Activated naive CD4-positive, alpha-beta T cell treated with anti-CD3 and anti-CD28 coated beads for 36 hours (primary cell): ENCODE measurements at regions of chr6 and their contacts with region 1.

Region 1: GRCh38 chr6:3742426-3743344 is 8.8 kb downstream of the PXDC1 start:
- DNase-seq: peak; percentile 94
- H3K4me3 Mint-ChIP-seq: no peak overlapping the region
- H3K27ac Mint-ChIP-seq: no peak overlapping the region
- H3K4me1 Mint-ChIP-seq: peaks cover 10% of the 10 kb centered on the region
- H3K27me3 Mint-ChIP-seq: peaks cover 9% of the 10 kb centered on the region

Region 2: DNA sequence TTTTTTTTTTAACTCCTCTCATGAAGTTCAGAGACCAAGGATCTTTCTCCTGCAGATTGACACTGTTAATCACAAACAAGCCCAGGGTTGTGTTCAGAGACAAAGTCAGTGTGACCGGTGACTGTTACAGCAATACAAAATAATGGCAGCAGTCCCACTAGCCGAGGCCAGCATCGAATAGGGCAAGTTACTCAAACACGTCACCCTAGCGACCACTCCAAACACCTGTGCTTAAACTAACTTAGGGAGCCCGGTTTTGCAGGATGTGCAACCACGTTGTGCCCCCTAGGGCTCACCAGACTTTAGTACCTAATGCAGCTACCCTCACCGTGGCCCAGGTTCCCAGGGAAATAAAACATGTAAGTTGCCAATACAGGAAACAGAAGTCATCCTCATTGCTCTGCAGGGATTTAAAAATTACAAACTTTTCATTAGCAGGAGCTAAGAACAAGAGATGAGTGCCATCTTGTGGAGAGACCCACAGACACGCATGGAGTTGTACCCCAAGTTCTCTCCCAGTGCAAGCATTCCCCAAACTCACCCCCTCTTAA is 144.5 kb after region 1 on chr6:
- CTCF ChIA-PET with region 1: interaction called, 4 read pairs
- intact Hi-C with region 1: loop called (anchors 2 kb)
- DNase-seq: peak; percentile 14
- H3K4me3 Mint-ChIP-seq: no peak overlapping the region
- H3K27ac Mint-ChIP-seq: no peak overlapping the region
- H3K4me1 Mint-ChIP-seq: no peaks in the 10 kb centered on the region
- H3K27me3 Mint-ChIP-seq: no peaks in the 10 kb centered on the region

Region 3: GRCh38 chr6:3929281-3929798 is 186.7 kb after region 1 on chr6:
- CTCF ChIA-PET with region 1: interaction called, 21 read pairs
- intact Hi-C with region 1: loop called (anchors 1 kb)
- DNase-seq: no peak
- H3K4me3 Mint-ChIP-seq: no peak overlapping the region
- H3K27ac Mint-ChIP-seq: no peak overlapping the region
- H3K4me1 Mint-ChIP-seq: no peaks in the 10 kb centered on the region
- H3K27me3 Mint-ChIP-seq: no peaks in the 10 kb centered on the region

Region 4: GRCh38 chr6:3990692-3991501 is 248.2 kb after region 1 on chr6:
- CTCF ChIA-PET with region 1: interaction called, 10 read pairs
- intact Hi-C with region 1: loop called (anchors 1 kb)
- DNase-seq: peak; percentile 85
- H3K4me3 Mint-ChIP-seq: peak overlapping the region; percentile 3
- H3K27ac Mint-ChIP-seq: no peak overlapping the region
- H3K4me1 Mint-ChIP-seq: peaks cover 6% of the 10 kb centered on the region
- H3K27me3 Mint-ChIP-seq: no peaks in the 10 kb centered on the region

Region 5: DNA sequence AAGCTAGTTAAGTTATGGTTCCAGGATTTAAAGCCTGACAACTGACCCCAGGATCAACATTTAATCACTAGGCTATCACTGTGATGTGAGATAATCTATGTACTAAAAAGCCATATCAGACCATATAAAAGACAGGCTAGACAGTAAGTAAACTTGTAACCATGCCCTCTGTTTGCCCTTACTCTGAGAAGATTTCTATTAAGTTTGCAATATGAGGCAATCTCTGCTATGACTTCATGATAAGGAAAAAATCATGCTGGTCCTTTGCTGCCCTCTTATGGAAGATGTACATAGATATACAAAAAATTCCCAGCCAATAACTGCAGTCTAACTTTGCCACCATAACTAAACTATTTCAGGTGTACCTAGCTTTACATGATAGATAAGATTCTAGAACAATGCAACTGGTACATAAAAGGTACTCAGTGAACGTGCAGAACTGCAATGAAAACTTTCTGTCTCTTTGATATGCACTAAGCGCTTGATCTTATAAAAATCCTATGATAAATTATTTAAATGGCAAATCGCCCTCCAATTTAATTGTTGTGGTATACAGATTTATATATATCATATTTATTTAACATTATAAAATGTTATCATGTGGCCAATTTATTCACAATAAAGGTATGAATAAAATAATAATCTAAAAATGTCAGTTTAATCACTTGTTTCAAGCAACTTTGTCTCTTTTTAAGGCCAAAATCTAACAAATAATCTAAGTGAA is 265.8 kb after region 1 on chr6:
- CTCF ChIA-PET with region 1: interaction called, 7 read pairs
- intact Hi-C with region 1: loop called (anchors 2 kb)
- DNase-seq: peak; percentile 18
- H3K4me3 Mint-ChIP-seq: no peak overlapping the region
- H3K27ac Mint-ChIP-seq: no peak overlapping the region
- H3K4me1 Mint-ChIP-seq: peaks cover 48% of the 10 kb centered on the region
- H3K27me3 Mint-ChIP-seq: no peaks in the 10 kb centered on the region

Region 6: GRCh38 chr6:4155848-4156466 is 413.3 kb after region 1 on chr6:
- CTCF ChIA-PET with region 1: interaction called, 4 read pairs
- intact Hi-C with region 1: loop called (anchors 1 kb)
- DNase-seq: peak; percentile 92
- H3K4me3 Mint-ChIP-seq: no peak overlapping the region
- H3K27ac Mint-ChIP-seq: no peak overlapping the region
- H3K4me1 Mint-ChIP-seq: peaks cover 6% of the 10 kb centered on the region
- H3K27me3 Mint-ChIP-seq: peaks cover 3% of the 10 kb centered on the region

Region 7: GRCh38 chr6:4210629-4211423 is 468.1 kb after region 1 on chr6:
- CTCF ChIA-PET with region 1: interaction called, 3 read pairs
- intact Hi-C with region 1: loop called (anchors 1 kb)
- DNase-seq: peak; percentile 81
- H3K4me3 Mint-ChIP-seq: no peak overlapping the region
- H3K27ac Mint-ChIP-seq: no peak overlapping the region
- H3K4me1 Mint-ChIP-seq: peaks cover 18% of the 10 kb centered on the region
- H3K27me3 Mint-ChIP-seq: no peaks in the 10 kb centered on the region